PC-9 (cell line): ENCODE measurements at regions of chr2 and their contacts with region 1.

Region 1: DNA sequence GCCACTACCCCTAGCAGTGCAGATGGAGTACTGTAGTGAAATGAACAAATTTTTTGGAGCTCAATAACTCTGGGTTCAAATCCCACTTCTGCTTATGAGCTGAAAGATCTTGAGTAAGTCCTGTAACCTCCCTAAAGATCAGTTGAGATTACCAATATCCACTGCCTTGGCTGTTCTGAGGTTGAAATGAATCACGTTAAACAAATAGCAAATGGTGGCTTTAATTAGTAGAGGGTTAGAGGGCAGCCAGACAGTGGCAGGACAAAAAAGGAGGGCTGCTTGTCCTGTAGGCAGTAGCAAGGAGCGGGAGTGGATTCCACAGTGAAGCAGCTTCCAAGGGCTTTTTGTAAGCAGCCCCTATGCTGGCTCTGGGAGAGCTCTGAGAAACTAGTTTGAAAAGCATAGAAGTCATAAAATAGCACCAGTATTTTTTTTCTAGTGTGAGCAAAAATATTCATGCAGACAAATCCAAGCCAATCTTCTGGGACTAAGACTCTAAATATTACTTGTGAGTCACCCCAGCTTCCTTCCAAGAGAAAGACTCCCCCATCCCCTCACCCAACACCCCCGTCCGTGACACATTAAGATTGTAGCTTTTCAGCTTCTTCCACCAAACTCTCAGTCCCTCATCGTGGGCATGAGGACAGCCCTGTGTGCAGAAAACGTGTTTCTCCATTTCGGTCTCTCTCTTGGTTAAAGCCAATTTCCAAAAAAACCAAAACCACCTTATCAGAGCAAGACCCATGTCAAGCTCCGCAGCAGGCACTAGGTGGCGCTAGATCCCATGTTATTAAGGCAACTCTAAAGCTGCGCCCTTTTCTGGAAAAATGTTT is 123.5 kb upstream of the LGALSL start:
- DNase-seq: peak; percentile 76 to 77
- H3K4me3 ChIP-seq: peak overlapping the region; percentile 44; the same call in 1 of the 2 replicates
- H3K27ac ChIP-seq: no peak overlapping the region; the same call in 1 of the 2 replicates
- H3K4me1 ChIP-seq: peaks cover 22% of the 10 kb centered on the region
- H3K27me3 ChIP-seq: no peaks in the 10 kb centered on the region
- CTCF ChIP-seq: peak; percentile 97

Region 2: DNA sequence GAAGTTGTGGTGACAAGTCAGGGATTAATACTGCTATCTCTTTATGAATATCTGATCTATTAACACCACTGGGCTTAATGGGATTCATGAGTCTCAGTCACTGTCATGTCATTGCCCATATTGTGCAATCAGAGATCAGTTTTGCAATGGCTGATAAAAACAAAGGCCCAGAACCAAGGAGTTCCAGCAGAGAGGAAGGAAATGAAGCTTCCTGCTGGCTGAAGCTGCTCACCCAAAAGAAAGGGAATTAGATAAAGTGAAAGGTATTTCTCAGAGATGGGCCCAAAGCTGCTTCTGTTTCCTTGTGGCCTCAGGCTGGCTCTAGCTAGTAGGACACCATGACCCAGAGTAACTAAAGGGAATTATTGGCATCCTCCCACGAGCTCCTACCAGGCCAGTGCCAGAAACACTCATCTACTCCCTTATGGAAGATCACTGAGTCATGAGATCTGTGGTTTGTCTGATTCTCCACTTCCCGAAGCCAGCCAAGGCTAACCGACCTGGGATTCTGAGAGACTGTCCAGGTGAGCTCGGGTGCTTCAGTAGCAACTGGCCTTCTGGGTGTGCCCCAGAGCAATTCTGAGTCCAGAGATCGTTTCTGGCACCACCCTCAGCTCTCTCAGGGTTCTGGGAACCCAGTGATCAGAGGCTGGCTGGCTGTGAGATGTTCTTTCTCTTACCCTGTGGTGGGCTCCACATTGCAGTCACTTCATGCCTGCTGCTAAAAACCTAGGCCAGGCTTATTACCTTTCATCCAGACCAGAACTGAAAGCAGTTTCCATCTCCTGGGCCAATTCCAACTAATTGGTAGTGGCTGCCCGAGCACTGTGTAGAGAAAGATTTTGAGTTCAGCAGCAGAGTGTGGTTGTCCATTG is 56.7 kb before region 1 on chr2:
- CTCF ChIA-PET with region 1: interaction called, 4 read pairs
- POLR2A ChIA-PET with region 1: interaction called, 4 read pairs
- intact Hi-C with region 1: loop called (anchors 1 kb)
- DNase-seq: peak; percentile 81 to 98
- H3K4me3 ChIP-seq: peak overlapping the region; percentile 42; the same call in 1 of the 2 replicates
- H3K27ac ChIP-seq: peak overlapping the region; percentile 93
- H3K4me1 ChIP-seq: peaks cover 69% of the 10 kb centered on the region
- H3K27me3 ChIP-seq: no peaks in the 10 kb centered on the region
- CTCF ChIP-seq: no peak

Region 3: GRCh38 chr2:64488050-64488974 is 157.8 kb after region 1 on chr2:
- CTCF ChIA-PET with region 1: interaction called, 9 read pairs
- POLR2A ChIA-PET with region 1: interaction called, 4 read pairs
- intact Hi-C with region 1: loop called (anchors 1 kb)
- DNase-seq: peak in 1 of 2 experiments; percentile 74
- H3K4me3 ChIP-seq: no peak overlapping the region
- H3K27ac ChIP-seq: no peak overlapping the region
- H3K4me1 ChIP-seq: peaks cover 4% of the 10 kb centered on the region; the same call in 1 of the 2 replicates
- H3K27me3 ChIP-seq: no peaks in the 10 kb centered on the region
- CTCF ChIP-seq: peak; percentile 98

Region 4: GRCh38 chr2:64888591-64889309 is 558.3 kb after region 1 on chr2:
- CTCF ChIA-PET with region 1: interaction called, 3 read pairs
- POLR2A ChIA-PET with region 1: no interaction called
- intact Hi-C with region 1: loop called (anchors 1 kb)
- DNase-seq: peak; percentile 80 to 92
- H3K4me3 ChIP-seq: no peak overlapping the region
- H3K27ac ChIP-seq: no peak overlapping the region
- H3K4me1 ChIP-seq: peaks cover 8% of the 10 kb centered on the region
- H3K27me3 ChIP-seq: no peaks in the 10 kb centered on the region
- CTCF ChIP-seq: peak; percentile 79

Region 5: DNA sequence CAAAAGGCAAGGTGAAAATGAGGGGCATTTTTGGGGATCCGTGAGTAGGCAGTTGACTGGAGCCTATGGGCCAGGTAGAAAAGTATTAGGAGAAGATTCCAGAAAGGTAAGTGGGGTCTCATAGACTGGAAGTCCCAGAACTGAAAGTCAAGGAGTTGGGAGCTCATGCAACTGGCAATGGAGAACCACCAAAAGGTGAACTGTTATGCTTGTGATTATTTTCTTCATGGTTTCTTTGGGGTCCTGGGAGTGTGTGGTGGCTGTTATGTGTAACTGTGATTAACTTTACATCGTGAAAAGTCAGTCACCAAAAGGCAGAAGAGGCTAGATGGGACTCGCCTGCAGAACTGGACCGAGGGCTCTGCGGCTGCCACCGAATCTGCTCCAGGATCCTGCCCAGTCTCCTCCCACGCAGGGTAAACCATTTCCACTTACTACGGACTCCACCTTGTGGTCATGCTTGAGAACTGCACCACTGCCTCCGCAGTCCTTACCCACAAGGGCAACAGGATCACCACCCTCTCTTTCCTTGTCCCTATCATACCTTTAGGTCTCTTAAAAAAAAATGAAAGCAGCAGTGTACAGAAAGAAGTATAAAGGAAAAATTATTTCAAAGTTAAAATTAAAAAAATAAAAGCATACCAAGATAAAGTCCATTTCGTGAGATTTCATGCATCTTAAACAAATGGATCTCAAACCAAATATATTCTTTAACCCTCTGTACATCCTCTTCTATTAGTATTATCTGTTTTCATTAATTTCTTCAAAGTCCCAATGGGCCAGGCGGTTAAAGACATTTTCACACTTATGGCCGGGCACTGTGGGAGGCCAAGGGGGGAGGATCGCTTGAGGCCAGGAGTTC is 710.1 kb after region 1 on chr2:
- CTCF ChIA-PET with region 1: no interaction called
- POLR2A ChIA-PET with region 1: no interaction called
- intact Hi-C with region 1: loop called (anchors 10 kb)
- DNase-seq: peak; percentile 58 to 76
- H3K4me3 ChIP-seq: no peak overlapping the region
- H3K27ac ChIP-seq: no peak overlapping the region
- H3K4me1 ChIP-seq: 0 out of 2 replicates have a peak, but pooled peaks cover 2% of the 10 kb centered on the region
- H3K27me3 ChIP-seq: no peaks in the 10 kb centered on the region
- CTCF ChIP-seq: peak; percentile 98